Activated B cell treated with CpG ODN at 0.5 μM for 24 hours (primary cell): ENCODE measurements at regions of chr15 and their contacts with region 1.

Region 1: DNA sequence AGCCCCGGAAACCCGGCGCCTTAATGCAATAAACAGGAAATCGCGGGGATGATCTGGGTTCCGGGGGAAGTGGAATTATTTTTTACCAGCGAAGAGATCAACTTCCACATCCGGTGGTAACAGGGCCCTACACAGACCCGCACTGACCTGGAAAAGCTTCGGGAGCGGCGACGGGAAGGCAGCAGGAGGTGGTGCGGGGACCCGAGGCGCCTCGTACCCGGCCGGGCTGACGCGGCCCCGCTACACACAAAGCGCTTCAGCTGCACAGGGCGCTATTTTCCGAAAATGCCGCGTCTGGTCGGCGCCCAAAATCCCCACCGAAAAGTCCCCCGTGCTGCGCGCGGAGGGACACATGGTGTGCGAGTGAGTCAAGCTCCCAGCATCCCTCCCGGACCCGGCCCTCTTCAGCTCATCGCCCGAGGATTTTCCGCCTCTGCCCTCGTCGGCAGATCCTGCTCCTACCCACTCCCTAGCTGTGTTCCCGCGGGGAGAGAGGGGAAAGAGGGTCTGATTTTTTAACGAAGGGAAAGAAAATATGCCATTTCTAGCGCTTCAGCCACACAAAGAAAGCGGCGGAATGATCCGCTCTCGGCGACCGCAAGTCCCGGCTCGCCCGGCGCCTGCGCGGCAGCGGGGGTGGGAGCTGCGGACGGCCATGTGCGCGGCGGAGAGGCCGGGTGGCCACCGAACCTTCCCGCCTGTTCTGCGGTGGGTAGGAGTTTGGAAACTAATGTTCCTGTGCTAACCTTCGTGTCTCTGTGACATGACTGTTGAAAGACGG is at the start of gene GABPB1:
- DNase-seq: peak; percentile 87
- ATAC-seq: peak; percentile 55
- H3K4me3 Mint-ChIP-seq: peak within 1 kb of the TSS; percentile 98
- H3K27ac Mint-ChIP-seq: peak within 1 kb of the TSS; percentile 99
- H3K4me1 Mint-ChIP-seq: peaks cover 69% of the 10 kb centered on the region
- H3K27me3 Mint-ChIP-seq: no peaks in the 10 kb centered on the region
- CTCF ChIP-seq: no peak
- total RNA-seq, gene GABPB1: 32.5 and 32.7 TPM in 2 replicates

Region 2: DNA sequence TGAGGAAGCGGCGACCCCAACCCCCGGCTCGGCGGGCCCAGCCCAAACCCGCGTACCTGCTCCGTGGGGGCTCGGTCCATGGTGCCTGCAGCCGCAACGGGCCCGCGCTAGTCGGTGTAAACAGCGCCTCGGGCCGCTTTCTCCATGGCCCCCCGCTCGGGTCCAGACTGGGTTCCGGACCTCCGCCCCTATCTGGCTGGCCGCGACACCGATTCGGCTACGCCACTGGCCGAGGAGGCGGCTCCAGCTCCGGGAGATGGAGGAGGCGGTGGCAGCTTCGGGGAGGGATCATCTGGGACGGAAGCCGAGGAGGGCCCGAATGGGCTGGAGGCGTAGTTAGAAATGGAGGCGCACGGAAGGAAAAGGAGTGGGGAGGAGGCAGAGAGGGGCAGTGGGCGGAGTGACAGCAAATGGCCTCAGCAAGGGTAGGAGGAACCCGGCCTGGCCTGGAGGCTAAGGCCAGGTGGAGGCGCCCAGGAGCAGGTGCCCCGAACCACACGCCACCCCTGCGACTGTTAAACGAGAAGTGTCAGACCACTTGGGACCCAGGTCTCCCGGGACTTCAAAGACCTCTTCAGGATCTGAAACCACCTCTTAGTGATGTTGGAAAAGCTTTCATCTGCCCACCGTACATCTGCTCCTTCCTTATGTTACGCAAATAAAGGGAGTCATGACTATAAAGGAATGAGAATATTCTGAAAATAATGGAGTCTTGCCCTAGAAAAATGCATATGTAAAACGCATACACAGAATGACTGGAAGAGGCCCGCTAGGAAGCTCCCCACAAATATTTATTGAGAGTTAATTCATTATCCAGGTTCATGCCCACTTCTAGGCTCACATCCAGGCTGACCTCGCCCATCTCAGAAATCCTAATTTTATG is 1308.6 kb before region 1 on chr15 and contains the start of gene SECISBP2L:
- CTCF ChIA-PET with region 1: no interaction called
- POLR2A ChIA-PET with region 1: interaction called, 8 read pairs
- intact Hi-C with region 1: loop called (anchors 1 kb)
- DNase-seq: peak; percentile 82
- ATAC-seq: peak; percentile 97
- H3K4me3 Mint-ChIP-seq: peak within 1 kb of the TSS; percentile 97
- H3K27ac Mint-ChIP-seq: peak within 1 kb of the TSS; percentile 95
- H3K4me1 Mint-ChIP-seq: peaks cover 36% of the 10 kb centered on the region
- H3K27me3 Mint-ChIP-seq: no peaks in the 10 kb centered on the region
- CTCF ChIP-seq: no peak
- total RNA-seq, gene SECISBP2L: 52.6 and 56.5 TPM in 2 replicates

Region 3: GRCh38 chr15:50119063-50120040 is 235.7 kb before region 1 on chr15 and contains the start of gene ATP8B4:
- CTCF ChIA-PET with region 1: no interaction called
- POLR2A ChIA-PET with region 1: interaction called, 10 read pairs
- intact Hi-C with region 1: no loop called
- DNase-seq: no peak
- ATAC-seq: no peak
- H3K4me3 Mint-ChIP-seq: no peak within 1 kb of the TSS
- H3K27ac Mint-ChIP-seq: no peak within 1 kb of the TSS
- H3K4me1 Mint-ChIP-seq: peaks cover 4% of the 10 kb centered on the region
- H3K27me3 Mint-ChIP-seq: no peaks in the 10 kb centered on the region
- CTCF ChIP-seq: no peak
- total RNA-seq, gene ATP8B4: 0.54 and 0.86 TPM in 2 replicates

Region 4: GRCh38 chr15:50134520-50135024 is 220.5 kb before region 1 on chr15:
- CTCF ChIA-PET with region 1: no interaction called
- POLR2A ChIA-PET with region 1: no interaction called
- intact Hi-C with region 1: no loop called
- DNase-seq: no peak
- ATAC-seq: peak; percentile 66
- H3K4me3 Mint-ChIP-seq: no peak overlapping the region
- H3K27ac Mint-ChIP-seq: peak overlapping the region; percentile 71
- H3K4me1 Mint-ChIP-seq: peaks cover 25% of the 10 kb centered on the region
- H3K27me3 Mint-ChIP-seq: no peaks in the 10 kb centered on the region
- CTCF ChIP-seq: no peak

Region 5: DNA sequence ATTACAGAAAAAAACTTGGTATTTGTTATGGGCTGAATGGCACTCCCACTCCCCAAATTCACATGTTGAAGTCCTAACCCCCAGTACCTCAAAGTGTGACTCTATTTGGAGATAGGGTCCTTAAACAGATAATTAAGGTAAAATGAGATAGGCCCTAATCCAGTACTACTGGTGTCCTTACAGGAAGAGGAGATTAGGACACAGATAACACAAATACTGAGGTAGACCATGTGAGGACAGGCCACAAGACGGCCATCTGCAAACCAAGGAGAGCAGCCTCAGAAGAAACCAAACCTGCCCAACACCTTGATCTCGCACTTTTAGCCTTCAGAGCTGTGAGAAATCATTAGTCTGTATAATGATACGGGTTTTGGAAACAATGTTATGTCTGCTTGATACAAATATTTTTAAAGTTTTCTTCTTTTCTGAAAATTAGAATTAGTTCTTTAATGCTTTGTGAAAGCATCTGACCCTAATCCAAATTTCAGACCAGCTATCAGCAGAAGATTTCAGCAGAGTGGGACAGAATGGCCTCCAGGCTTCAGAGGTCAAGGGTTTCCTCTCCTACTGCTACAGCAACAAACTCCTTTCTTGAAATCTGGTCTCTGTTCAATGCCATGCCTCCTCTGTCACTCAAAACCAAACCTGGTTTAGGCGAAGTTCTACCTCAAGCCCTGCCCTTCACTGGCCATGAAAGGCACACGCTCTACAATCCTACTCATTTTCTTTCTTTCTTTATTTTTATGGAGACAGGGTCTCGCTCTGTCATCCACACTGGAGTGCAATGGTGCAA is 67.5 kb before region 1 on chr15:
- CTCF ChIA-PET with region 1: no interaction called
- POLR2A ChIA-PET with region 1: no interaction called
- intact Hi-C with region 1: no loop called
- DNase-seq: no peak
- ATAC-seq: no peak
- H3K4me3 Mint-ChIP-seq: no peak overlapping the region
- H3K27ac Mint-ChIP-seq: no peak overlapping the region
- H3K4me1 Mint-ChIP-seq: no peaks in the 10 kb centered on the region
- H3K27me3 Mint-ChIP-seq: no peaks in the 10 kb centered on the region
- CTCF ChIP-seq: no peak

Region 6: DNA sequence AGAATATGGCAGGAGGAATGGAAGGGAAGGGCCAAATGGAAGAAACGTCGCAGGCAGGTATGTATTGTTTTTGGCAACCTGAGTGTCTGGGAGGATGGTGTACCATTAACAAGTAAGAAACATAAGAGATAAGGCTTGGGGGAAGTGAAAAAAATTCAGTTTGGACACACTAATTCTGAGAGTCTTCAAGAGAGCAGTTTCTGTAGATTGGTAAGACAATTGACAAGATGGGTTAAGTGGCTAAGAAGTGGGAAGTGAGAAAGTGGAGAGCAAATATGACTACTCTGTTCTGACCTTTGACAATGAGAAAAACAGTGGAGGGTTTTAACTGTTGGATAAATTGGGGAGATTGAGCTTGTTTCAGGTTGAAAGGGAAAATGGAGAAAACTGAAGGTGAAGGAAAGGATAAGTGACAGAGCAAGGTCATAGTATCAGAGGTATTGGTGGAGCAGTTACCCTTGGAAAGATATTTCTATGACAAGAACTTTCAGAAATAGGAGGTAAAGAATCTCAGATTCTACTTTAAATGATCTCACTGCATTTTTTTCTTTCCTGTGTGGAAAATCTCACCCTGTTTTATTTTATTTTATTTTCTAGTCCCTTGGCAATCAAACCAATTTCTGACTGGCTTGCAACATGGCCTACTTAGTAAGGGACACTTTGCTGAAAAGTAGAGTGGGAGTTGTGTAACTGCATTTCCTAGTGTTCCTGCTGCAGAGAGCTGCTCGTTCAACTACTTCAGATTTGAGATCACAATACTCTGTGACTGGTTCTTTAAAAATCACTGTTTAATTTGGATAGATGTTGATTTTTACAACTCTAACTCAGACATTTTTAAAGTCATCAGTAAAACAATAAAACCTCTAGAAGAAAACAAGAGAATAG is 23.1 kb after region 1 on chr15:
- CTCF ChIA-PET with region 1: no interaction called
- POLR2A ChIA-PET with region 1: interaction called, 79 read pairs
- intact Hi-C with region 1: loop called (anchors 1 kb)
- DNase-seq: no peak
- ATAC-seq: peak; percentile 87
- H3K4me3 Mint-ChIP-seq: peak overlapping the region; percentile 28
- H3K27ac Mint-ChIP-seq: peak overlapping the region; percentile 77
- H3K4me1 Mint-ChIP-seq: peaks cover 17% of the 10 kb centered on the region
- H3K27me3 Mint-ChIP-seq: no peaks in the 10 kb centered on the region
- CTCF ChIP-seq: no peak

Region 7: DNA sequence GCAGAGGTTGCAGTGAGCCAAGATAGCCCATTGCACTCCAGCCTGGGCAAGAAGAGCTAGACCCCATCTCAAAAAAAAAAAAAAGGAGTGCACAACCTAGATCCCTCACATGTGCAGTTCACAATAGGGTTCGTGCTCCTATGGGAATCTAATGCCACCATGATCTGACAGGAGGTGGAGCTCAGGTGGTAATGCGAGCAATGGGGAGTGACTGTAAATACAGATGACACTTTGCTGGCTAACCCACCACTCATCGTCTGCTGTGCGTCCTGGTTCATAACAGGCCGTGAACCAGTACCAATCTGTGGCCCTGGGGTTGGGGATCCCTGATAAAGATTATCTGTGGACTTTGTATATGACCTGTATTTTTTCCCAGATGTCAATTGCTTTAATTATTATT is 85.9 kb after region 1 on chr15:
- CTCF ChIA-PET with region 1: no interaction called
- POLR2A ChIA-PET with region 1: interaction called, 32 read pairs
- intact Hi-C with region 1: loop called (anchors 1 kb)
- DNase-seq: no peak
- ATAC-seq: no peak
- H3K4me3 Mint-ChIP-seq: no peak overlapping the region
- H3K27ac Mint-ChIP-seq: no peak overlapping the region
- H3K4me1 Mint-ChIP-seq: peaks cover 30% of the 10 kb centered on the region
- H3K27me3 Mint-ChIP-seq: no peaks in the 10 kb centered on the region
- CTCF ChIP-seq: no peak

Region 8: DNA sequence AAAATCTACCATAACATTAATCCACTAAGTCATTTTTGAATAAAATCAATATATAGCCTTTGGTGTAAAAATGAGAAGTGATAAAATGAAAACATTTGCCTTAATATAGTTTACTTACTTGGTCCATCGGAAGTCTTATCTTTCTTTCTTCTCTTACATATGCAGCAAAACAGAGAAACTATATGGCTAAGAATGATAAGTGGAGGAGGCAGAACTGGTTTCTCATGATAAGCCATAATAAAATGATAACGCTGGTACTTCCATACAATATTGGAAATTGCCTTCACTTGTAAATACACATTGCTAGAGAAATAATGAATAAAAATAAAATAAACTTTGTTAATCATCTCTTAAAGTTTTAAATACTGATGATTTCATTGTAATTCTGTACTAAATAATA is 239.3 kb after region 1 on chr15:
- CTCF ChIA-PET with region 1: no interaction called
- POLR2A ChIA-PET with region 1: no interaction called
- intact Hi-C with region 1: no loop called
- DNase-seq: no peak
- ATAC-seq: no peak
- H3K4me3 Mint-ChIP-seq: no peak overlapping the region
- H3K27ac Mint-ChIP-seq: no peak overlapping the region
- H3K4me1 Mint-ChIP-seq: no peaks in the 10 kb centered on the region
- H3K27me3 Mint-ChIP-seq: no peaks in the 10 kb centered on the region
- CTCF ChIP-seq: no peak

Region 9: GRCh38 chr15:50765195-50765973 is 410.4 kb after region 1 on chr15 and contains the start of gene SPPL2A:
- CTCF ChIA-PET with region 1: no interaction called
- POLR2A ChIA-PET with region 1: interaction called, 5 read pairs
- intact Hi-C with region 1: loop called (anchors 2 kb)
- DNase-seq: peak; percentile 87
- ATAC-seq: peak; percentile 94
- H3K4me3 Mint-ChIP-seq: peak within 1 kb of the TSS; percentile 97
- H3K27ac Mint-ChIP-seq: peak within 1 kb of the TSS; percentile 95
- H3K4me1 Mint-ChIP-seq: peaks cover 48% of the 10 kb centered on the region
- H3K27me3 Mint-ChIP-seq: no peaks in the 10 kb centered on the region
- CTCF ChIP-seq: no peak
- total RNA-seq, gene SPPL2A: 79.1 and 85.3 TPM in 2 replicates